ENCODE measurements at regions of chr6 and their contacts with region 1.

Region 1: DNA sequence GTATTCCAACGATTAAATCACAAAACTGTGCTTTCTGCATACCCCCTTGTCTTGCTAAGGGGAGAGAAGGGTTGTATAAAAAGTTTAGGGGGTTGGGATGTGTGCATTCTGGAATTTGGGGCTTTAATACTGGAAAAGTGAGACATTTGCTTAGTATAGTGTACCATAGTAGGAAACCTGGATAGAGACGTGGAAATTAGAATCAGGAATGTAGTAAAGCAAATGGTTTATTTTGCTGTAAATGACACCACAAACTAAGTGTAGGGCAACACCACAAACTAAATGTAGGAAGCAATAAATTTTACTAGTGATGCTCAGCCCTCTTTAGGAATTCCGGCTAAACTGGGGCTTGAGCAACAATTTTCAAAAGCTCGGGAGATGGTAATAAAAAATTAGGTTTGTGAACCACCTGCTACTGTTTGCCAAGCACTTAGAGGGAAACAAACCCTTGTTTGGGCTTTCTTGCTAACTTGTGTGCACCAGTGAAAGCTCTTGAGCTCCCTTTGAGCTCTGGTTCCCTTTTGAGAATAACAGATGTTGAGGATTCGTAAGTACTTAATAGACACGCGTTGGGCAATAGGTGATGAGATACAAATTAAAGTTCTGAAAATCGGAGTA is 13.8 kb downstream of the BRD2 start:
- DNase-seq: no peak
- H3K4me3 ChIP-seq: no peak overlapping the region
- H3K27ac ChIP-seq: no peak overlapping the region
- H3K4me1 ChIP-seq: peaks cover 44% of the 10 kb centered on the region
- H3K27me3 ChIP-seq: no peaks in the 10 kb centered on the region
- CTCF ChIP-seq: no peak
- POLR2A ChIP-seq: no peak

Region 2: DNA sequence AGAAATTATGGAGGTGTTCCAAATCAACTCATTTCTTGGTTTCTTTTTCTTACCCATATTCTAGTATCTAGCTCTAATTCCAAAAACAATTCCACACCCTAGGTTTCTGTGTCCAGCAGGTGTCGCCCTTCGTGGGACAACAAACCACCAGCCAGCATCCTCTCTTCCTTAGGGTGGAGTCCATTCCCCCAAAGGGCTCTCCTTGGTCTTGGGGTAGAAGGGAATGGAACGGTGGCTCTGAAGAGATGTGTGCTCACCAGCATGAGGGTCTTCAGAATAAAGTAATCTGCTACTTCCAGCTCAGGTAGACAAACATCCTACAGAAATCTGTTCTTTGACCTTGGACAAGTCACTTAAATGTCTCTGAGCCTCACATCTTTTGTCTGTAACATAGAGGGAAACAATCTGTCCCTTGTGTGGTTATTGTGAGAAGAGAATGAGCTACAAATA is 48.5 kb before region 1 on chr6:
- intact Hi-C with region 1: loop called (anchors 2 kb)
- DNase-seq: no peak
- H3K4me3 ChIP-seq: no peak overlapping the region
- H3K27ac ChIP-seq: no peak overlapping the region
- H3K4me1 ChIP-seq: no peaks in the 10 kb centered on the region
- H3K27me3 ChIP-seq: no peaks in the 10 kb centered on the region
- CTCF ChIP-seq: peak; percentile 38 to 87 (median 83)
- POLR2A ChIP-seq: no peak

Region 3: DNA sequence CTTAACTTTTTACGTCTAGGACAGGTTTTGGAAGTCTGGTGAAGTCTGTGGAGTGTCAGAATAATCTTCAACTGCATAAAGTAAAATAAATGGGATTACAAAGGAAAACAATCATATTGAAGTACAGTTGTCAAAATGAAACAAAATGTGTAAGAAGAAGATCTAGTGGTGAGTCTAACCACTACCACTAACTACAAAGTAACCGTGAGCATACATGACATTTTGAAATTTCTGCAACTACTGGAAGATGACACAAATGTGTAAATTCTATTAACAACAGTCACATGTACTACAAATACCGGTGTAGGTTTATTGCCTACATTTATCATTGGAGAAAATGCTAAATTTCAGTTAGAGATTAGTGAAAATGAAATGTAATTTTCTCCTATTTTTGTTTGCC is 259.8 kb after region 1 on chr6:
- intact Hi-C with region 1: no loop called
- DNase-seq: no peak
- H3K4me3 ChIP-seq: no peak overlapping the region
- H3K27ac ChIP-seq: no peak overlapping the region
- H3K4me1 ChIP-seq: no peaks in the 10 kb centered on the region
- H3K27me3 ChIP-seq: no peaks in the 10 kb centered on the region
- CTCF ChIP-seq: no peak
- POLR2A ChIP-seq: no peak